ENCODE measurements at regions of chr3 and their contacts with region 1.

Region 1: DNA sequence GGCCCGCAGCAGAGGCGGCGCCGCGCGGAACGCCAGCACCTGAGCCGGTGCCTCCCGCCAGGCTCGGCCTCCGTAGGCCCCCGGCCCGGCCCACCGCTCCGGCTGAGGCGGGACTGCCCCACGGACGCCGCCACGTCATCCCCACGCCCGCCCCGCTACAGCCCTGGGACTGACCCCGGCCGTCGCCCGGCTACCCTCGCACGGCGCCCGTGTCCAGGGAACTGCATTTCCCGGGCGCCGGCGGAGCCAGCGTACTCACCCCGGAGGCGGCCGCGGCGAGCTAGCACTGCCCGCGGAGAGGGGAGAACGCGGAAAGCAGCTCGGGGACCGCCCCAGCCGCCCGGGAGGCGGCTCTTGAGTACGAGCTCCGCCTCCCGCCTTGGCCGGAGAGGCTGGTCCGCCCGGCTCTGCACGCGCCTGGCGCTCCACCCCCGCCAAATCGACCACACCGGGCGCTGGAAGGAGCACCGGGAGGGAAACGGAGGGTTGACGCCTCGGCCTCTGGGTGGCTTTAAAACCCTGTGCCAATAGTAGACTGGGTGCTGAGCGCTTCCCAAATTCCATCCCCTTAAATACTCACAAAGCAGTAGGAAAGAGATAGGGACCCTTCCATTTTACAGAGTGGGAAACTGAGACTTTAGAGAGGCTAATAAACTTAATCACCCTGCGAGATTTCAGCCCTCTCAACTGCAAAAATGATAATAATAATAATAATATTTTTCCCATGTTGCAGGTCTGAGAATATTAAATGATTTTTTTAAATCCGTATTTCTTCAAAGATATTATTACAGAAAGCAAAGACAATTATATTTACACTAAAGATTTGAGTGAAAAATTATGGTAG is at the start of gene B4GALT4:
- DNase-seq: peak; percentile 70 to 88
- H3K4me3 ChIP-seq: peak within 1 kb of the TSS; percentile 72 to 87 (median 77)
- H3K27ac ChIP-seq: peak within 1 kb of the TSS; percentile 61; the same call in 1 of the 2 replicates
- H3K4me1 ChIP-seq: 0 out of 7 replicates have a peak, but pooled peaks cover 0 to 1% (median 0%) of the 10 kb centered on the region in 4 experiments
- H3K27me3 ChIP-seq: no peaks in the 10 kb centered on the region
- CTCF ChIP-seq: no peak
- EP300 ChIP-seq: no peak
- POLR2A ChIP-seq: peak; percentile 77 to 89
- RAD21 ChIP-seq: no peak
- total RNA-seq, gene B4GALT4: 44.7 and 56.5 TPM in 2 replicates

Region 2: GRCh38 chr3:119230071-119230470 is 10.7 kb before region 1 on chr3:
- CTCF ChIA-PET with region 1: interaction called, 13 read pairs
- POLR2A ChIA-PET with region 1: interaction called, 8 read pairs
- DNase-seq: no peak
- H3K4me3 ChIP-seq: no peak overlapping the region
- H3K27ac ChIP-seq: no peak overlapping the region
- H3K4me1 ChIP-seq: no peaks in the 10 kb centered on the region
- H3K27me3 ChIP-seq: no peaks in the 10 kb centered on the region
- CTCF ChIP-seq: no peak
- EP300 ChIP-seq: no peak
- POLR2A ChIP-seq: no peak
- RAD21 ChIP-seq: no peak

Region 3: DNA sequence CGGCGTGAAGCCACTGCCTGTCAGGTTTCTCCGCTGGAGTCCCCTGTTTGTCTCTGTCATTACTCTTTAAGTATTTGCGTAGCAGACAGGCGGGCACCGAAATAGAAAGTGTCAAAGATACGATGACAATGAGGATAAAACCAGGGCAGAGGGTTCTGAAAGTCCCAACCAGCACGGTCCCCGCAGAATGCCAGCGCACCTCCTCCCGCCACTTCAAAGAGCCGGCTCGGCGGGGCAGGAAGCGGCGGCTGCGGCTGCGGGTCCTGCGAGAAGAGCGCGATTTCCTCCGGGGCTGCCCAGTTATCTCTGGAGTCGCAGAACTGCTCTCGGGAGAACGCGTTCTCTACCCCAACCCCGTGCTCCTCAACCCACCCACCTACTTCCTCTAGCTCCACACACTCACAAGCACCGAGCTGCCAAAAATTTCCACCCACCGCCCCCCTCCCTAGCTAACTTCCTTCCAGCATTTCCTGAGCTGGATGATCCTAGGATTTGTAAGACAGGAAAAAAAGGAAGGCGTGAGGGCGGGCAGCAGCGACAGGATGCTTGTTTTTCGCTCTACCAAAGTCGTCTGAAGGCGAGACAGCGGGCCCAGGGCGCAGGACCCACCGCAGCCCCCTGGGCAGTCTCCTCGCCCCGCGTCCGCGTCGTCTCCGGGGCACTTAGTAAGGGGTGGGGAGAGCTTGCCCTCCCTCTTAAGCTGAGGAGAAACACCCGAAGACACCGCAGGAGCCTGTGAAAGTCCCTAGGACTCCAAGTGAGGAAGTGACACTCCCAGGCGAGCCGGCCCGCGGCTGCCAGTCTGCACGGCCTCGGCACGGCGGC is 53.3 kb after region 1 on chr3 and contains the start of gene ARHGAP31:
- CTCF ChIA-PET with region 1: interaction called, 11 read pairs
- POLR2A ChIA-PET with region 1: no interaction called
- DNase-seq: peak in 1 of 2 experiments; percentile 78
- H3K4me3 ChIP-seq: peak within 1 kb of the TSS; percentile 73 to 84 (median 80)
- H3K27ac ChIP-seq: no peak within 1 kb of the TSS
- H3K4me1 ChIP-seq: peaks cover 2 to 14% (median 9%) of the 10 kb centered on the region in 4 experiments
- H3K27me3 ChIP-seq: peaks cover 0 to 29% (median 13%) of the 10 kb centered on the region in 4 experiments; a peak in 4 of 7 replicates
- CTCF ChIP-seq: no peak
- EP300 ChIP-seq: no peak
- POLR2A ChIP-seq: no peak
- RAD21 ChIP-seq: no peak
- total RNA-seq, gene ARHGAP31: 4.9 and 7.6 TPM in 2 replicates

Region 4: GRCh38 chr3:119331661-119332060 is 90.8 kb after region 1 on chr3:
- CTCF ChIA-PET with region 1: no interaction called
- POLR2A ChIA-PET with region 1: no interaction called
- DNase-seq: no peak
- H3K4me3 ChIP-seq: no peak overlapping the region
- H3K27ac ChIP-seq: no peak overlapping the region
- H3K4me1 ChIP-seq: peaks cover 0 to 3% (median 0%) of the 10 kb centered on the region in 4 experiments; a peak in 2 of 7 replicates
- H3K27me3 ChIP-seq: no peaks in the 10 kb centered on the region
- CTCF ChIP-seq: no peak
- EP300 ChIP-seq: no peak
- POLR2A ChIP-seq: no peak
- RAD21 ChIP-seq: no peak